Dorsolateral prefrontal cortex (tissue), 120 donors: ENCODE measurements at regions of chr3 and their contacts with region 1.

Region 1: GRCh38 chr3:120239644-120240043 is 45.4 kb downstream of the GPR156 start:
- DNase-seq: no peak
- H3K4me3 ChIP-seq: no peak overlapping the region
- H3K27ac ChIP-seq: no peak overlapping the region
- H3K27me3 ChIP-seq: no peaks in the 10 kb centered on the region
- CTCF ChIP-seq: no peak

Region 2: DNA sequence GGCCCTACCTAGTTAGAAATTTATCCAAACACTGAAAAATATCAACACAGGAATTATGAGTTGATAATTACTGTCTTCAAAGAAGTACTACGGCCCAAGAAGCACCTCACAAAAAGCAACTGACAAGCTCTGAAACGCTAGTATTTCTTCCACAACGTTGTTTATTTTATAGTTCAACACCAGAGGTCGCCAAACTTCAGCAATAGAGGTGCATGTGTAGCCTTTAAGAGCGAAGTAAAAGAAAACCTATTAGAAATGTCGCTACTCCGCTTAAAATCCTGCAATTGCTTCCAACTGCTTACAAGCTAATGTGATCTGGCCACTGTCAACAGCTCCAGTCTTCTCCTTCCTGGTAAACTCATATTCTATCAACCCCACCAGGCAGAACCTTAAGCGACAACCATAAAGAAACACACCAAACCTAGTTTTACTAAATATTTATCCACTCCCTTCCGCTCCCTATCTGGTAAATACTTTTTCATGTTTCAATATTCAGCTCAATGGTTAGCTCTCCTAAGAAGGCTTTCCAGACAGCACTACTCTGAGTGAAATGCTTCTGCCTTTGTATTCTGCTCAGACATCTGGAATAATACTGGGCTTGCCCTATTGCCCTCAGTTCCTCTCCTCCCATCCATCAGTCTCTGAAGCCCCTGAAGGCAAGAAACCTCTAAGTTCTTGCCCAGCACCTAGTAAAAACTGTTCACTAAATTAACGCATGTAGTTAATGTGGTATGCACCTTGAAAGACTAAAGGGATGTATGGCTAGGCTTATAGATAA is 347.5 kb before region 1 on chr3:
- intact Hi-C with region 1: loop called in 1 of 2 experiments (anchors 5 kb)
- DNase-seq: peak in 1 of 10 donors; percentile 16
- H3K4me3 ChIP-seq: peak overlapping the region in 19 of 59 donors; percentile 6 to 47 (median 25)
- H3K27ac ChIP-seq: no peak overlapping the region
- H3K27me3 ChIP-seq: no peaks in the 10 kb centered on the region
- CTCF ChIP-seq: peak; percentile 28 to 94 (median 75)

Region 3: GRCh38 chr3:120274739-120275167 is 35.1 kb after region 1 on chr3:
- intact Hi-C with region 1: no loop called
- DNase-seq: no peak
- H3K4me3 ChIP-seq: no peak overlapping the region
- H3K27ac ChIP-seq: no peak overlapping the region
- H3K27me3 ChIP-seq: no peaks in the 10 kb centered on the region
- CTCF ChIP-seq: no peak

Region 4: DNA sequence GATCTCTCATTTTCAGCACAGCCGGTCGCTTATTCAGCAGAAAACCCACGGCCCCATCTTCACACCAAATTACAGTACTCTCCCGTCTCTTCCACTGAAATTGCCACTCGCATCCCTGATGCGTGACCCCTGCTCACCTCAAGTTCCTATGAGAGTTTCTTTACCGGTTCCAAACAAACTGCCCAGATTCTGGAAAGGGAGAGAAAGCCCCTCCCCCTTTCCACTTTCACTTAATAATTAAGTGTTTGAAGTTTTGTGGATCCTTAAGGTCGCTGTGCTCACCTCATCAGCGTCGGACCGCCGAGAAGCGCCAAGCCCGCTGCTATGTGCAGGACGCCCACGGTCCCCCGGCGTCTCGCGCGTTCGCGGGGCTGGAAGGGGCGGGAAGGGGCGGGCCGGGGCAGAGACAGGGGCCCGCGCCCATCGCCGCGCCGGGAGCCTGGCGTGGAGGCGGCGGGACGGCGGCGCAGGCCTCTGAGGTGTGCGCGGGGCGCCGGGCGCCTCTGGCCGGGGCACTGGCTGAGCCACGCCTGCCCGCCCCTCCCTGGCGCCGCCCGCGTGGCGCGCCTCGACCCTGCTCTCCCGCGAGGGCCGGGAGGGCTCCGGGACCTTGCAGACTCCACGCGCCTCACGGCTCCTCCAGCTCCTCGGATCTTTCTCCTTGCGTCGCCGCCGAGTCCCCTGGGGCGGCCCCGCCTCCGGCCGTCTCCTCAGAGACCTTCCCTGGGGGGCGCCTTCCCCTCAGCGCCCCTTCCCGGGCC is 45.3 kb after region 1 on chr3 and contains the start of gene GPR156:
- intact Hi-C with region 1: no loop called
- DNase-seq: no peak
- H3K4me3 ChIP-seq: peak within 1 kb of the TSS; percentile 39 to 71 (median 54)
- H3K27ac ChIP-seq: no peak within 1 kb of the TSS
- H3K27me3 ChIP-seq: peaks cover 0 to 19% (median 0%) of the 10 kb centered on the region in 45 donors
- CTCF ChIP-seq: no peak
- total RNA-seq, gene GPR156: 0.30 to 3.1 (median 1.0) TPM

Region 5: GRCh38 chr3:120795017-120795648 is 555.5 kb after region 1 on chr3:
- intact Hi-C with region 1: loop called in 1 of 2 experiments (anchors 5 kb)
- DNase-seq: peak; percentile 51 to 86 (median 69)
- H3K4me3 ChIP-seq: no peak overlapping the region
- H3K27ac ChIP-seq: no peak overlapping the region
- H3K27me3 ChIP-seq: no peaks in the 10 kb centered on the region
- CTCF ChIP-seq: peak; percentile 51 to 87 (median 77)